Prostate gland (tissue), 2 donors: ENCODE measurements at regions of chr19 and their contacts with region 1.

Region 1: DNA sequence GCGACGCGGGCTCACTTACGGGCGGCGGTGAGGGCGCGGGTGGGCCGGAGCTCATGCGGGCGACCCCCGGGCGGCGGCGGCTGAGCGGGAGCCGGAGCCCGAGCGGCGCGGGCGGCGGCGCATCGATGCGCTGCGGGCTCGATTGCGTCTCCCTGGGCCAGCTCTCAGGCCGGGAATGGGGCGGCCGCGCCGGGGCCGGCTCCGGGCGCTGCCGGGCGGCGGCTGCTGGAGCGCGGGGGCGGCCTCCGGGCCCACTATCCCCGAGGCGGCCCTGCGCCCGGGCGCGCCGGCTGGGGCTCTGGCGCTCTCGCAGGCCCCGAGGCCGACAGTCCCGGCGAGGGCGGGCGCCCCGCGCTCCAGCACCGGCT is 1.4 kb upstream of the TSHZ3 start:
- DNase-seq: peak; percentile 42
- H3K4me3 ChIP-seq: peak overlapping the region; percentile 93 to 94
- H3K27ac ChIP-seq: peak overlapping the region; percentile 91 to 92
- H3K4me1 ChIP-seq: no peaks in the 10 kb centered on the region
- H3K27me3 ChIP-seq: no peaks in the 10 kb centered on the region
- CTCF ChIP-seq: no peak
- POLR2A ChIP-seq: no peak

Region 2: GRCh38 chr19:30696514-30696913 is 654.2 kb before region 1 on chr19:
- intact Hi-C with region 1: loop called (anchors 10 kb)
- DNase-seq: no peak
- H3K4me3 ChIP-seq: no peak overlapping the region
- H3K27ac ChIP-seq: no peak overlapping the region
- H3K4me1 ChIP-seq: no peaks in the 10 kb centered on the region
- H3K27me3 ChIP-seq: no peaks in the 10 kb centered on the region
- CTCF ChIP-seq: peak in 2 of 4 experiments; percentile 14 to 34
- POLR2A ChIP-seq: no peak

Region 3: DNA sequence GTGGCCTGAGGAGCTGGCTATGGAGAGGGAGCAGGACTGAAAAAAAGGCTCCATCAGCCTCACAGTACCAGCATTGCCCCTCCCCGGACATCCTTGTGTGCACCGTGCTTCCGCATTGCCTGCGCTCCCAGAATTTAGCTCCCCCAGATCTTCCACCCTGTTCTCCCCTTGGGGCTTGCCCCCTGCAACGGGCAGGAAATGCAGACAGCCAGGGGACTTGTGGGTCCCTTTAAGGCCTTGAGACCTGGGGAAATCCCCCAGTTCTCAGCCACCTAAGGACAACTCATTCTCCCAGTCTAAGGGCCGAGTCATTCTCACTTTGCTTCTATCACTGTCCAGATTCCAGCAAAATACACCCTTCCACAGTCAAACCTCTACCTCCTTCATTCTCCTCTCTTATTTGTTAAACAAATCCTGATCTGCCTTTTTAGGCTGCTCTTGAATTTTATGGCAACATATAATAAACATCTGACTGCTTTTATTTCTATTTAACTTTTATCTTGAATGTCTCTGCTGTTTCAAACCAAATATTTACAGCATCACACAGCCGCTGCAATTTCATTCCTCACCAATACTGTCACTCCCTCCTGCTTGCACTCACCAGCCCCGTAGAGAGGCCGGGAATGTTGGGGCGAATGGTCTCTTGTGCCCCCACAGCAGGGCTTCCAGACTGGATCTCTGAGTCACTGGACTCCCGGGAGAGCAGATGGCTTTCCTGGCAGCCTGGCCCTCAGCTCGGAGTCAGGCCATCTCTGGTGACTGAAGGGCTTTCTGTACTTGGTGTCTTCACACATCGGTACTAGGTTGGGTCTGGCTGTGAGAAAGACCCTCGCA is 223.3 kb before region 1 on chr19:
- intact Hi-C with region 1: loop called (anchors 10 kb)
- DNase-seq: peak; percentile 36
- H3K4me3 ChIP-seq: no peak overlapping the region
- H3K27ac ChIP-seq: peak overlapping the region; percentile 53 to 60
- H3K4me1 ChIP-seq: peaks cover 4% of the 10 kb centered on the region
- H3K27me3 ChIP-seq: no peaks in the 10 kb centered on the region
- CTCF ChIP-seq: no peak
- POLR2A ChIP-seq: no peak

Region 4: DNA sequence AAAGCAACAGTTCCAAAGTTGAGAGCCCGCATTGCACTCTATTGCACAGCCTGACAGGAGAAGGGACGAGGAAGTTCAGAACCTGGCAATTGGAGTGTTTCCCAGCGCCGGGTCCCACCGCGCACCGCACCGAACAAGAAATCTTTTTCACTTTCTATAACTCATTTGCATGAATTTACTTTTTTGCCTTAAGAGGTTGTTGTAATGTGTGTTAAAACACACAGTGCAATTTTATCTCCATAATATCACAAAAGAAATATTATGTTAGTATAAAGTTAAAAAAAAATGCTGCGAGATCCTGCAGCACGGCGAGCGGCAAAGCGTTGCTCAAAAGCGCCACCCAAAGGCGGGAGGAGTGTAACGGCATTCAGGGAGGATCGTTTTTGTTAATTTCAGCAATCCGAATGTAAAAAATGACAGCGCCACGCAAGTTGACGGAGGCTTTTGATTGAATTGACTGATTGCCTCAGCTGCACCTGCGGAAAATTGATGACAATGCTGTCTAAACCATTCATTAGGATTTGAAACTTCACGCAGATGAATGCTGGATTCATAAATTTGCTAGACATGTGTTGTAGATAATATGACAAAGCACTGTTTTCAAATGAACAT is 691.1 kb after region 1 on chr19:
- intact Hi-C with region 1: loop called (anchors 5 kb)
- DNase-seq: peak; percentile 52
- H3K4me3 ChIP-seq: peak overlapping the region; percentile 21 to 23
- H3K27ac ChIP-seq: peak overlapping the region in 1 of 2 donors; percentile 18
- H3K4me1 ChIP-seq: no peaks in the 10 kb centered on the region
- H3K27me3 ChIP-seq: no peaks in the 10 kb centered on the region
- CTCF ChIP-seq: peak; percentile 51 to 77 (median 70)
- POLR2A ChIP-seq: no peak

Region 5: DNA sequence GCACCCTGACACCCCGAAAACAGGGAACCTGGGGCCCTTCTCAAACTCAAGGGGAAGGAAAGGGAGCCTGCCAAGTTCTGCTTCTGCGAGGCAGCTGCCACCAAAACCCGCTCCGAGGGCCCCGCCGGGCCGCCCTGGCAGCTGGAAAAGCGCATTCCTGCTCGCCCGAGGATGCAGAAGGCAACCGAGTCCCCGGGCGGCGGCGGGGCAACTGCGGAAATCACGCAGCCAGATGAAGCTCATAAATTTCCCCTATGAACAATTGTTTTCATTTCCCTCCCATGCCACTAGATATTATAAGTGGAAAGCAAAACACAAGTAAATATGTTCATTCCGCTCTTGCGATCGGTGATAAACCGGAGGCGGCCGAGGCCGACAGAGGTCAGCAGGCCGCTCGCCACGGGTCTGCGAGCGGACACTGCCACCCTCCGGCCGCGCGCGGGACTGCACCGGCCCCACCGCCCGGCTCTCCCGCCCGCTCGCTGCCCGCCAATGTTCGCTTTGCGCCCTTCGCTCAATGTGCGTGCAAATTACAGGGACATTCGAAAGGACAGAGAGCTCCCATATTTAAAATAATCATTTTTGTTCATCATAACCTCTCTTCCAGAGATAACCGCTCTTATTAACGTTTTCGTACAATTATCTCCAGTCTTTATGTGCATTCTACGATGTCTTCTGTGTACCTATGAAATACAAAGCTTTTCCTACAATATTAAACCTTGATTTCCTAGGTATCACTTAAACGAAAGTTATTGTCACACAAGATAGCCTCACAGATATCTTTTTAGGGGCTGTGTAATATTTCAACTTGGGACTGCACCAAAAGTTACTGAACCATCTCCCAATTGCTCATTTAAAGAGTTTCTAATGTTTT is 873.9 kb after region 1 on chr19:
- intact Hi-C with region 1: loop called (anchors 10 kb)
- DNase-seq: peak; percentile 23
- H3K4me3 ChIP-seq: no peak overlapping the region
- H3K27ac ChIP-seq: no peak overlapping the region
- H3K4me1 ChIP-seq: peaks cover 5% of the 10 kb centered on the region
- H3K27me3 ChIP-seq: no peaks in the 10 kb centered on the region
- CTCF ChIP-seq: peak; percentile 96 to 100 (median 98)
- POLR2A ChIP-seq: no peak